ENCODE measurements at regions of chr16 and their contacts with region 1.

Region 1: DNA sequence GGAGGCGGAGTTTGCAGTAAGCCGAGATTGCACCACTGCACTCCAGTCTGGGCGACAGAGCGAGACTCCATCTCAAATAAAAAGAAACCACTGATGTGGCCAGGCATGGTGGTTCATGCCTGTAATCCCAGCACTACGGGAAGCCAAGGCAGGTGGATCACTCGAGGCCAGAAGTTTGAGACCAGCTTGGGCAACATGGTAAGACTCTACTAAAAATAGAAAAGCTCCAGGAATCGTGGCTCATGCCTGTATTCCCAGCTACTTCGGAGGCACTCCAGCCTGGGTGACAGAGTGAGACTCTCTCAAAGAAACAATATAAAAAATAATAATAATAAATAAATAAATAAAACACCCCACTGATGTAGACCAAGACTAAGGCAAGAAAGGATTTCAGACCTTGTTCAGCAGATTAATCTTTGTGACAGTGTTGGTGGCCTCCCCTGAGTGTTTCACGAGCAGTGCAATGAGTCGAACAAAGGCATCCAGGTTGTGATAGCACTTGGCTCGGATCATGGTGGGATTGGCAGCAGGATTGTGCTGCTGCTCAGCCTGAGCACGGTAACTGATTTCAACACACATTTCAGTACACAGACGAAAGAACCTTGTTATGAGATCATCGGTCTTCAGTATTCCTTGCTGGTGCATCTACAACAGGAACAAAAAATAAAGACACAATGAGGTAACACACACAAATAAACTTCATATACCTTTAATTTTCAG is 18.6 kb downstream of the SETD6 start:
- DNase-seq: no peak
- ATAC-seq: no peak
- H3K4me3 Mint-ChIP-seq: no peak overlapping the region
- H3K27ac Mint-ChIP-seq: no peak overlapping the region
- H3K4me1 Mint-ChIP-seq: no peaks in the 10 kb centered on the region
- H3K27me3 Mint-ChIP-seq: no peaks in the 10 kb centered on the region

Region 2: DNA sequence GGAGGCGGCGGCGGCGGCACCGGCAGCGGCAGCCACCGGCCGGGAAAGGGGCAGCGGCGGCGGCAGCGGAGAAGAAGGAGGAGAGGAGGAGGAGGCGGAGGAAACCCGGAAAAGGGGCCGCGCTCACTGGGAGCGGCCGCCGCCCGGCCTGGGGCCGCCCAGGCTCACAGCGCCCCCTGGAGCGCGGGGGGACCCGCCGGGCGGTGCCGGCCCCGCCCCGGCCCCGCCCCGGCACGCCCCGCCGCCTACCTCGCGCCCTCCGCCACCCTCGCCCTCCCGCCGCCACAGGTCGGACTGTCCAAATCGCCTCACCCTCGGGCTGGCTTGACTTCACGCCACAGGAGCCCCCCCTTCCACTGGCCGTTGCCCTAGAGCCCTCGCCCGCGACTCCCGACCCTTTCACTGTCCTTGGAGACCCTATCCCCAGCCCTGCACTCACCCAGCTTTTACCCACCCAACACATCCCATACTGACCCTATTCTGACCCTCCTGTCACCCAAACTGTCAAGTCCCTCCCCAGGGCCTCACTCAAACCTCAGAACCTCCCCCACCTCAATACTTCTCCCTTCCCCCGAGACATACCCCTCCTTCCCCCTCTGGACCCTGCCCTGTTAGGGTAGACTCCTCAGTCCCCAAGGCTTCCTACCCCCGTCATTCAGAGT is 335.8 kb before region 1 on chr16 and contains the start of gene CSNK2A2:
- CTCF ChIA-PET with region 1: no interaction called
- POLR2A ChIA-PET with region 1: no interaction called
- intact Hi-C with region 1: no loop called
- DNase-seq: peak; percentile 84
- ATAC-seq: peak; percentile 94
- H3K4me3 Mint-ChIP-seq: peak within 1 kb of the TSS; percentile 84
- H3K27ac Mint-ChIP-seq: peak within 1 kb of the TSS; percentile 74
- H3K4me1 Mint-ChIP-seq: peaks cover 34% of the 10 kb centered on the region
- H3K27me3 Mint-ChIP-seq: peaks cover 6% of the 10 kb centered on the region
- total RNA-seq, gene CSNK2A2: 85.9 to 92.2 TPM

Region 3: DNA sequence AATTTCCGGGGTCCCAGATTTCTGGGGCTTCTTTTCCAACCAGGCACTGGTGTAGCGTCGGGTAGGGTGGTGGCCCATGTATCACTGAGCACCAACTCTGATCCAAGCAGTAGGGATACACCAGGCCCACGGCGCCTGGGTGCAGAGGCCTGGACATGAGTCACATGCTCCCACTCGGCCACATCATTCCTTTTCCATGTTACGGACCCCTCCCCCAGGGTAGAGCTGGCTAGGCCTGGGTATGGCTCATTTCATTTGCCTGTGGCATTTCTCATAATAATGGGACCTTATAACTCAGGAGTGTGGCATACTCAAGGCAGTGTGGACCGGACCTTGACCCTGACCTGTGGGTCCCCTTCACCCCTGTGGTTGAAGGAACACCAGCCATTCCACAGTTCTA is 52.0 kb before region 1 on chr16:
- CTCF ChIA-PET with region 1: no interaction called
- POLR2A ChIA-PET with region 1: no interaction called
- intact Hi-C with region 1: no loop called
- DNase-seq: no peak
- ATAC-seq: no peak
- H3K4me3 Mint-ChIP-seq: no peak overlapping the region
- H3K27ac Mint-ChIP-seq: no peak overlapping the region
- H3K4me1 Mint-ChIP-seq: no peaks in the 10 kb centered on the region
- H3K27me3 Mint-ChIP-seq: peaks cover 2% of the 10 kb centered on the region

Region 4: DNA sequence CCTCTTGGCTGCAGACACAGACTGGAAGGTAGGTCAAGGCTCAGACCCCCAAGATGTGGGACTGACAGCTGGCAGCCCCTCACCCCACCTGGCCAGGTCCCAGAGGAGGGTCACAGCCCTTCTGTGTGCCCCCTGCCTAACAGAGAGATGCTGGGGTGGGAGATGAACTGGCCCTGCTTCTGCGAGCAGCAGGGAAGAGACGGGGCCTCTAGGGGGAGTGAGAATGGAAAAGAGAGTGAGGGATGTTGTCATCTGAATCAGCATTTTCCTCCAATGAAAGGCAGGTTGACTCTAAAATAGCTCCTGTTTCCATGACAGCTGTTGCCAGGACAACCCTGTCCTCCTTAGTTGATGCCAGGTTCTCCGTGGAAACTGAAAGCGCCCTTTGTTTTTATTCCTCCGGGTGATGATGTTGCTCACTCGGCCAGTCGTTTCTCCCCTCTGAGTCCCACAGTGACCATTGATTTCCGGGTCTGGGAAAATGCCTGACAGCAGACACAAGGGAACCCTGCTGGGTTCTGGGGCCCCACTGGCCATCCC is 38.9 kb before region 1 on chr16:
- CTCF ChIA-PET with region 1: no interaction called
- POLR2A ChIA-PET with region 1: no interaction called
- intact Hi-C with region 1: no loop called
- DNase-seq: peak; percentile 91
- ATAC-seq: peak; percentile 76
- H3K4me3 Mint-ChIP-seq: peak overlapping the region; percentile 17
- H3K27ac Mint-ChIP-seq: peak overlapping the region; percentile 37
- H3K4me1 Mint-ChIP-seq: peaks cover 19% of the 10 kb centered on the region
- H3K27me3 Mint-ChIP-seq: no peaks in the 10 kb centered on the region

Region 5: DNA sequence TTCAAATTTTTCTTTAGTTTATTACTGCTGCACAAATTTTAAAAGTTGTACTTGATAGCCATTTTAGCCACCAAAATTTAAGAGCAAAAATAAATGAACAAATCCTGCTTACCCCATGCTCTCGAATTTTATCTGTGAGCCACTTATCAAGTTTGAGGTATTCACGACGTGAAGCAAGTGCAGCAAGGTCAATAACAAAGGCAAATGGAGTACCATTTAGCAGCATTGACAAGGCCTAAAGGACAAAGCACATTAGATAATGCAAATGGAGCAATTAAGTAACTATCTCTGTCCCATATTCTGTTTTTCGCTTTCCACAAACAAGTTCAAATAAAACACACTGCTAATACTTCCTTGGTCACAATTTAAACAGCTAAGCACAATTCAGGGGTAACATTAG is 41.0 kb after region 1 on chr16:
- CTCF ChIA-PET with region 1: no interaction called
- POLR2A ChIA-PET with region 1: no interaction called
- intact Hi-C with region 1: loop called in 1 of 2 experiments (anchors 2 kb)
- DNase-seq: no peak
- ATAC-seq: no peak
- H3K4me3 Mint-ChIP-seq: no peak overlapping the region
- H3K27ac Mint-ChIP-seq: no peak overlapping the region
- H3K4me1 Mint-ChIP-seq: peaks cover 4% of the 10 kb centered on the region
- H3K27me3 Mint-ChIP-seq: no peaks in the 10 kb centered on the region